Heart left ventricle (tissue), 16 donors: ENCODE measurements at regions of chr13 and their contacts with region 1.

Region 1: DNA sequence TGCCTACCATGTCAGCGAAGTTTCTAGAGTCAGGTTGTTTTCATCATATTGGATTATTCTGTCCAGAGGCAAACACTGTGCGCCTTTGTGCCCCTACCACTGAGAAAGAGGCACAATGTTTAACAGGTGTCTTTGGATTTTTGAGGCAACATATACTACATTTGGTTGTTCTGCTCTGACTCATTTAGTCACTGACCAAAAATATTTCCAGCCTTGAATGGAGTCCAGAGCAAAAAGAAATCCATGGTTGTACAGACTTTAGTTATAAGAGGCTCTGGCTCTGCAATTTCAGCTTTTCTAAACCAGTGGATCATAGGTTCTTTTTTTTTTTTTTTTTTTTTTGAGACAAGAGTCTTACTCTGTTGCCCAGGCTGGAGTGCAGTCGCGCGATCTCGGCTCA is 35.7 kb downstream of the LACC1 start:
- DNase-seq: no peak
- ATAC-seq: no peak
- H3K4me3 ChIP-seq: no peak overlapping the region
- H3K27ac ChIP-seq: no peak overlapping the region
- H3K4me1 ChIP-seq: peaks cover 0 to 20% (median 10%) of the 10 kb centered on the region in 12 donors
- H3K27me3 ChIP-seq: peaks cover 0 to 38% (median 0%) of the 10 kb centered on the region in 9 donors
- CTCF ChIP-seq: no peak
- POLR2A ChIP-seq: no peak

Region 2: GRCh38 chr13:43516401-43516833 is 399.0 kb before region 1 on chr13:
- intact Hi-C with region 1: no loop called
- DNase-seq: peak in 2 of 5 donors; percentile 12 to 27
- ATAC-seq: peak; percentile 76 to 89 (median 83)
- H3K4me3 ChIP-seq: no peak overlapping the region
- H3K27ac ChIP-seq: peak overlapping the region in 6 of 12 donors; percentile 0 to 62 (median 14)
- H3K4me1 ChIP-seq: peaks cover 0 to 32% (median 10%) of the 10 kb centered on the region in 12 donors
- H3K27me3 ChIP-seq: no peaks in the 10 kb centered on the region
- CTCF ChIP-seq: no peak
- POLR2A ChIP-seq: no peak

Region 3: DNA sequence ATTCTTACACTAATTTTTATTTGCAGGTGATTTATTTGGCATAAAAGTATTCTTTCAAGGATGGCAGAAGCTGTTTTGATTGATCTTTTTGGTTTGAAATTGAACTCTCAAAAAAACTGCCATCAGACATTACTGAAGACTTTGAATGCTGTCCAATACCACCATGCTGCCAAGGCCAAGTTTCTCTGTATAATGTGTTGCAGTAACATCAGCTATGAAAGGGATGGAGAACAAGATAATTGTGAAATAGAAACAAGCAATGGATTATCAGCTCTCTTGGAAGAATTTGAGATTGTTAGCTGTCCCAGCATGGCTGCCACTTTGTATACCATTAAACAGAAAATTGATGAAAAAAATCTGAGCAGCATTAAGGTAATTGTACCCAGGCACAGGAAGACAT is 34.5 kb before region 1 on chr13:
- intact Hi-C with region 1: no loop called
- DNase-seq: no peak
- ATAC-seq: no peak
- H3K4me3 ChIP-seq: peak overlapping the region in 3 of 12 donors; percentile 77 to 83 (median 78)
- H3K27ac ChIP-seq: no peak overlapping the region
- H3K4me1 ChIP-seq: peaks cover 0 to 42% (median 10%) of the 10 kb centered on the region in 12 donors
- H3K27me3 ChIP-seq: no peaks in the 10 kb centered on the region
- CTCF ChIP-seq: no peak
- POLR2A ChIP-seq: no peak

Region 4: GRCh38 chr13:43981091-43981490 is 65.6 kb after region 1 on chr13:
- intact Hi-C with region 1: loop called in 4 of 10 experiments (anchors 5 to 10 kb)
- DNase-seq: no peak
- ATAC-seq: no peak
- H3K4me3 ChIP-seq: no peak overlapping the region
- H3K27ac ChIP-seq: peak overlapping the region in 1 of 12 donors; percentile 58
- H3K4me1 ChIP-seq: peaks cover 0 to 15% (median 5%) of the 10 kb centered on the region in 12 donors
- H3K27me3 ChIP-seq: no peaks in the 10 kb centered on the region
- CTCF ChIP-seq: no peak
- POLR2A ChIP-seq: no peak

Region 5: DNA sequence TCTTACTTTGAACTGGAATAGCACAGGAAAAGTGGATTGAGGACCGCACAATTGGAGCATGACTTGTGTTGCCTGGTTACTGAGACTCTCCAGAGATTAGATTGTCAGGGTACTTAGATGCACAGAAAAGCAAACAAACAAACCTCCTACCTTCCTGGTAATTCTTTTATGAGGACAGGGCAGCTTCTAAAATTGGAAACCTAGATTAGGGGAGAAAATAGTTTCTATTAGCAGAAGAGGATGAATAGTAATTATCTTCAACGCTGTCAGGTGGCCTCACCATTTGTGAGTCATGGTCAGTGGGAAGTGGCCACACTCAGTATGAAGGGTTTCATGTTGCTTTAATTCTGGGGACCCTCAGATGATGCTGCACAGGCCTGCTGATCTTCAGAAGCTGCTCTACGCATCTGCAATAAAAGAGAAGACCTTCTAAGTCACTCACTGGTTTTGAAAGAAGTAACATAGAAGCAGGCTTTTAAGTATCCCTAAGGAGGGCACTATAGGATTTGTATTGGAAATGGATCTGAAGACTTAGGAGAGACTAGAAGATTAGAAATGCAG is 71.0 kb after region 1 on chr13:
- intact Hi-C with region 1: loop called in 4 of 10 experiments (anchors 5 to 10 kb)
- DNase-seq: peak in 1 of 5 donors; percentile 37
- ATAC-seq: peak; percentile 89 to 95 (median 92)
- H3K4me3 ChIP-seq: no peak overlapping the region
- H3K27ac ChIP-seq: peak overlapping the region; percentile 51 to 86 (median 77)
- H3K4me1 ChIP-seq: peaks cover 0 to 45% (median 15%) of the 10 kb centered on the region in 12 donors
- H3K27me3 ChIP-seq: peaks cover 0 to 2% (median 0%) of the 10 kb centered on the region in 9 donors
- CTCF ChIP-seq: peak in 3 of 12 donors; percentile 5 to 31 (median 19)
- POLR2A ChIP-seq: no peak

Region 6: GRCh38 chr13:44396701-44397580 is 481.5 kb after region 1 on chr13:
- intact Hi-C with region 1: no loop called
- DNase-seq: peak in 3 of 5 donors; percentile 38 to 62 (median 43)
- ATAC-seq: peak; percentile 62 to 83 (median 74)
- H3K4me3 ChIP-seq: peak overlapping the region in 4 of 12 donors; percentile 22 to 28 (median 27)
- H3K27ac ChIP-seq: peak overlapping the region in 10 of 12 donors; percentile 1 to 60 (median 26)
- H3K4me1 ChIP-seq: peaks cover 0 to 19% (median 0%) of the 10 kb centered on the region in 12 donors
- H3K27me3 ChIP-seq: no peaks in the 10 kb centered on the region
- CTCF ChIP-seq: no peak
- POLR2A ChIP-seq: no peak